Activated CD4-positive, alpha-beta T cell treated with anti-CD3 and anti-CD28 coated beads for 36 hours (primary cell): ENCODE measurements at regions of chr2 and their contacts with region 1.

Region 1: DNA sequence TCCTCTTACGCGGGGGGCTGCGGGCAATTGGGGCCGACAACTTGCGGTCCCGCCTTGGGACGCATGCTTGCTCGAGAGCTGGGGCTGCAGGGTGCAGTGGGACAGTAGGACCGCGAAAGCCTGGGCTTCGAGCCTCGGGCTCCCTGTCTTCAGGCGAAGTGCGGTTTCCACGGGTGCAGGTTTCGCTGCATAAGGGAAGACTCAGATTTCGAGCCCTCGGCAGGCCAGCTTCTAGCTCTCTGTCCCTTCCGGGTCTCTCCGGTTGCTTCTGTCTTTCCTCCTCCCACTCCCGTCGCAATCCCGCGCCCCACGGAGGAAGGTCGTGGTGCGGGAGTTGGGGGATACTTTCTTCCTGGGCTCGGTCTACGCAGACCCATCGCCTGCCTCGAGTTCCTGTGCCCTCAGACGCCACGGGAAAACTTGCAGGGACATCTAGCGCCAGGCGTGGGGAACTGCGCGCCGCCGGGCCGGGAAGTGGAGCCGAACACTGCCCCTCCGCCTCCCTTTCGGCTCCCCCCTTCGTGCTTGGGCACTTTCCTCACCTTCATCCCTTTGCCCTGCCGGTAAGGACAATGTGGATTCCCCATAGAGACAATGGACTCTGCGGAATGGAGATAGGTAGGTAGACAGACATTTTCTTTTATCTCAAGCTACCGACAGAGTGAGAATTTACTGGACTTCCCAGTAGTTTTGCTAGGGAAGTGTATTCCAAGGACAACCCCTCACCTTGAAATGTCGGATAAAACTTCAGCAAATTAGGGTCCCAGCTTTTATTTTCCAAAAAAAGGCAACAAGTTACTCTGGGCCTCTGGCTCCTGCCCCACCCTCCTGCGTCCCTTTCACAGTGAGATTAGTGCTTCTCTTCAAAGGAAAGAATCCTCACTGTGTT is 4.2 kb upstream of the HOXD13 start:
- DNase-seq: peak; percentile 61
- ATAC-seq: no peak
- H3K4me3 Mint-ChIP-seq: peak overlapping the region; percentile 51
- H3K27ac Mint-ChIP-seq: no peak overlapping the region
- H3K4me1 Mint-ChIP-seq: peaks cover 14% of the 10 kb centered on the region
- H3K27me3 Mint-ChIP-seq: peaks cover 82% of the 10 kb centered on the region

Region 2: GRCh38 chr2:175366815-175367214 is 721.5 kb before region 1 on chr2:
- CTCF ChIA-PET with region 1: no interaction called
- POLR2A ChIA-PET with region 1: no interaction called
- intact Hi-C with region 1: loop called in 1 of 2 experiments (anchors 2 kb)
- DNase-seq: peak; percentile 35
- ATAC-seq: peak; percentile 47
- H3K4me3 Mint-ChIP-seq: no peak overlapping the region
- H3K27ac Mint-ChIP-seq: no peak overlapping the region
- H3K4me1 Mint-ChIP-seq: no peaks in the 10 kb centered on the region
- H3K27me3 Mint-ChIP-seq: peaks cover 15% of the 10 kb centered on the region

Region 3: GRCh38 chr2:175414882-175415487 is 673.3 kb before region 1 on chr2:
- CTCF ChIA-PET with region 1: no interaction called
- POLR2A ChIA-PET with region 1: no interaction called
- intact Hi-C with region 1: loop called in 1 of 2 experiments (anchors 5 kb)
- DNase-seq: peak; percentile 35
- ATAC-seq: no peak
- H3K4me3 Mint-ChIP-seq: no peak overlapping the region
- H3K27ac Mint-ChIP-seq: no peak overlapping the region
- H3K4me1 Mint-ChIP-seq: no peaks in the 10 kb centered on the region
- H3K27me3 Mint-ChIP-seq: peaks cover 8% of the 10 kb centered on the region

Region 4: DNA sequence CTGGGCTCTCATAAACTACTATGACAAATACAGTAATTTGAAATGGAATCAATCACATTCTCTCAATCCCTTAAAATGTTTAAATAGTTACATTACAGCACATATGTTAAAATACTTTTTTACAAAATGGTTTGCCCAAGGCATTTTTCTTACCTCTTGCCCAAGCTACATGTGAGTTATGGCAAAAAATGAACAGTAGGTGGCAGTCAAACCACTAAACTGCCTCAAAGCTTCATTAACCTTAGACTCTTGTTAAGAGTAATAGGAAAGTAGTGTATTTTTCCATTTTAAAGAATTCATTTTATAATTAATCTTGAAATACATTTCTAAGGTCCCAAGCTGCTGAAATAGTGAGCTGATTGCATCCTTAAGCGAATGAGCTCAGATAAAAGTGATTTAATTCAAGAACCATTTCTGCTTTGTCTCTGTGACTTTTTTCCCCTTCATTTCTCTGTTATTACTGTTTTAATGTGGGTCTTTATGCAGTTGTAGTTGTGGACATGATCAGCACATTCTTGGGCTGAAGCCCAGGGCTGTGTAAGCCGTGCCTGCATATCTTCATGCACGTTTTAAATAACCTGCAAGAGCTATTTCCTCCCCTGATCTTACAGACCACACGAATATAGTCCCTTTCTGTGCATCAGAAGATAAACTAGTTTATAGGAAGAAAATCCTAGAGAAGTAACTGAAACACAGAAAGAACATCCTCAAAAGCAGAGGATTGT is 398.0 kb before region 1 on chr2:
- CTCF ChIA-PET with region 1: interaction called, 3 read pairs
- POLR2A ChIA-PET with region 1: no interaction called
- intact Hi-C with region 1: loop called (anchors 1 to 2 kb)
- DNase-seq: peak; percentile 19
- ATAC-seq: no peak
- H3K4me3 Mint-ChIP-seq: no peak overlapping the region
- H3K27ac Mint-ChIP-seq: no peak overlapping the region
- H3K4me1 Mint-ChIP-seq: no peaks in the 10 kb centered on the region
- H3K27me3 Mint-ChIP-seq: peaks cover 18% of the 10 kb centered on the region

Region 5: GRCh38 chr2:176110975-176111663 is 22.8 kb after region 1 on chr2:
- CTCF ChIA-PET with region 1: interaction called, 6 read pairs
- POLR2A ChIA-PET with region 1: no interaction called
- intact Hi-C with region 1: loop called in 1 of 2 experiments (anchors 2 kb)
- DNase-seq: peak; percentile 60
- ATAC-seq: no peak
- H3K4me3 Mint-ChIP-seq: no peak overlapping the region
- H3K27ac Mint-ChIP-seq: no peak overlapping the region
- H3K4me1 Mint-ChIP-seq: peaks cover 13% of the 10 kb centered on the region
- H3K27me3 Mint-ChIP-seq: peaks cover 70% of the 10 kb centered on the region

Region 6: DNA sequence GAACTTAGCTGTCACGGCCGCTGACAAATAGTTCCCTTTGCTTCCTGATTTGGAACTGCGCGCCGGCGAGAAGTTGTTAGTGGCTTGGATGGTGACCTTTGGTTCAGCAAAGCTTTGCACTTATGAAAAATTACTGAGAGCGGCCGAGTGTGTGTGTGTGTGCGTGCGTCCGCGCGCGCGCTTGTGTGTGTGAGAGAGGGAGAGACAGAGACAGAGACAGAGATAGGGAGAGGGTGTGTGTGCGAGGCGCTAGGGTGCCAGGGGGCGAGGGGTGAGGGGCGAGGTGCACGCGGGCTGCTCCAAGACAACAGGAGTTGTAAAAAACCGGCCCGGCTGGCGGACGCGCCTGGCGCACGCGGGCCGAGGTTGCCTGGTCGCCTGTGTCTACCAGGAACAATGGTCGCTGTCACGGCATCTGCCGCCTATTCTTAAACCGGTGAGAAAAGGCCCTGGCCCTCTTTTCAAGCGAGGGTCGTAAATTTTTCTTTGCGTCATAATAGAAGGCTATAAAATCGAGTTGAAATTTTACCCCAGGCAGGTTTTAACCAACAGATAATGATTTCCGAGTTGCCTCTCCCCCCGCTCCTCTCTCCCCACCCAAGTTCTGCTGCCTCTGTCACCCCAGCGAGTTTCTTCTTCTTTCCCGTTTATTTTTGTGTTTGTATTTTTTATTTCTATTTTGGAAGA is 69.3 kb after region 1 on chr2:
- CTCF ChIA-PET with region 1: no interaction called
- POLR2A ChIA-PET with region 1: no interaction called
- intact Hi-C with region 1: loop called (anchors 2 kb)
- DNase-seq: peak; percentile 39
- ATAC-seq: no peak
- H3K4me3 Mint-ChIP-seq: peak overlapping the region; percentile 32
- H3K27ac Mint-ChIP-seq: no peak overlapping the region
- H3K4me1 Mint-ChIP-seq: peaks cover 13% of the 10 kb centered on the region
- H3K27me3 Mint-ChIP-seq: peaks cover 67% of the 10 kb centered on the region

Region 7: GRCh38 chr2:176206682-176207081 is 118.4 kb after region 1 on chr2:
- CTCF ChIA-PET with region 1: no interaction called
- POLR2A ChIA-PET with region 1: no interaction called
- intact Hi-C with region 1: no loop called
- DNase-seq: no peak
- ATAC-seq: no peak
- H3K4me3 Mint-ChIP-seq: no peak overlapping the region
- H3K27ac Mint-ChIP-seq: no peak overlapping the region
- H3K4me1 Mint-ChIP-seq: no peaks in the 10 kb centered on the region
- H3K27me3 Mint-ChIP-seq: peaks cover 28% of the 10 kb centered on the region

Region 8: DNA sequence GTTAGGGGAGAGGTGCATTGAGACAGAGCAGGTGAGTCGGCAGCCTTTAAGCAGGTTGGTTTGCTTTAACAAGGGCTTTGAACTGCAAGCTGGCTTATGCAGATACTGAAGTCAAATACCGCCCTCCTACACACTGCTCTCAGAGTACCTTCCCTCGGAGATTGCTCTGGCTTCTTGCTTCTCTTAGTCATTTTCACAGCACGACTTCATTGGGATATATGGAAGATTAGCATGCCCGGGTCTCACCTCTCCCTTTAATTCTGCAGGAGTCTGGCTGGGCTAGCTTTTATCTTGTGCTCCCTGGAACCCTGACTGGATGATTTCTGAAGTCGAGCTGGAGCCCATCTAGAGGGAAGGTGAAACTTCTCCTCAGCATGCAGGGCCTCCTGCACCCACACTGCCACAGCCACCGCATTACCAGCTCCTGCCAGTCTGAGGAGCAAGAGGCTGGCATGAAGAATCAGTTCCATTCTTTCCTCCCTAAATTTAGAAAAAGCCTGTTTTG is 728.8 kb after region 1 on chr2:
- CTCF ChIA-PET with region 1: no interaction called
- POLR2A ChIA-PET with region 1: no interaction called
- intact Hi-C with region 1: no loop called
- DNase-seq: peak; percentile 62
- ATAC-seq: peak; percentile 78
- H3K4me3 Mint-ChIP-seq: no peak overlapping the region
- H3K27ac Mint-ChIP-seq: no peak overlapping the region
- H3K4me1 Mint-ChIP-seq: peaks cover 14% of the 10 kb centered on the region
- H3K27me3 Mint-ChIP-seq: peaks cover 2% of the 10 kb centered on the region